PC-9 (cell line): ENCODE measurements at regions of chr2 and their contacts with region 1.

Region 1: DNA sequence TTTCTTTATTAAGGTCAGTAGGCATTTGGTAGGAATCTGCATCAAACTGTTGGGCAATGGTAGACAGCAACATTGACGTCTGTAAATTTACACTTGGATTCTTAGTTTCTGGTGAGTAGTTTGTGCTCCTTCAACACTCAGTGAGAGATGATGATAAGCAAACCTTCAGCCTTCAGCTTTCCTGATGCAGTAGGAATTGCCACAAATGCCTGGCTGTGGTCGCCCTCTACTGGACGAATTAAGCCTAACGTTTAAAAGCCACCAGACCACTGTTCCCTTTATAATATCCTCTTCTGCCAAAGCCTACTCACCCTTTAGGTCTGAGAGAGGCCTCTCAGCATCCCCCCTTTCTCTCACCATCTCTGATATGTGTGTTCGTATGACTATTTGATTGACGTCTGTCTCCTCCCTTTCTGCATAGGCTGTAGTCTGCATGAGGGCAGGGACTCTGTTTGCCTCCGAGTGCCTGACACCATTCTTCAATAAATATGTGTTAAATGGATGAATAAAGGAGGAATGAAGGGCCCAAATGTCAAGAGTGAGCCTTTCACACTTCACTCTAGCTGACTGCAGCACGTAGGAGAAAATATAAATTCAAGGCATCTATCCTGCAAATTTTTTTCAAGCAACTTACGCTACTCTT is 47.0 kb upstream of the PLEKHM3 start:
- DNase-seq: peak in 1 of 2 experiments; percentile 55
- H3K4me3 ChIP-seq: no peak overlapping the region
- H3K27ac ChIP-seq: no peak overlapping the region
- H3K4me1 ChIP-seq: no peaks in the 10 kb centered on the region
- H3K27me3 ChIP-seq: no peaks in the 10 kb centered on the region
- CTCF ChIP-seq: peak; percentile 74

Region 2: GRCh38 chr2:206693399-206694137 is 1378.8 kb before region 1 on chr2:
- CTCF ChIA-PET with region 1: no interaction called
- POLR2A ChIA-PET with region 1: no interaction called
- intact Hi-C with region 1: loop called (anchors 5 kb)
- DNase-seq: peak; percentile 14 to 36
- H3K4me3 ChIP-seq: no peak overlapping the region
- H3K27ac ChIP-seq: no peak overlapping the region
- H3K4me1 ChIP-seq: no peaks in the 10 kb centered on the region
- H3K27me3 ChIP-seq: no peaks in the 10 kb centered on the region
- CTCF ChIP-seq: peak; percentile 72

Region 3: GRCh38 chr2:206981739-206982340 is 1090.5 kb before region 1 on chr2:
- CTCF ChIA-PET with region 1: no interaction called
- POLR2A ChIA-PET with region 1: no interaction called
- intact Hi-C with region 1: loop called (anchors 10 kb)
- DNase-seq: peak in 1 of 2 experiments; percentile 56
- H3K4me3 ChIP-seq: no peak overlapping the region
- H3K27ac ChIP-seq: no peak overlapping the region
- H3K4me1 ChIP-seq: peaks cover 32% of the 10 kb centered on the region
- H3K27me3 ChIP-seq: no peaks in the 10 kb centered on the region
- CTCF ChIP-seq: peak; percentile 72

Region 4: DNA sequence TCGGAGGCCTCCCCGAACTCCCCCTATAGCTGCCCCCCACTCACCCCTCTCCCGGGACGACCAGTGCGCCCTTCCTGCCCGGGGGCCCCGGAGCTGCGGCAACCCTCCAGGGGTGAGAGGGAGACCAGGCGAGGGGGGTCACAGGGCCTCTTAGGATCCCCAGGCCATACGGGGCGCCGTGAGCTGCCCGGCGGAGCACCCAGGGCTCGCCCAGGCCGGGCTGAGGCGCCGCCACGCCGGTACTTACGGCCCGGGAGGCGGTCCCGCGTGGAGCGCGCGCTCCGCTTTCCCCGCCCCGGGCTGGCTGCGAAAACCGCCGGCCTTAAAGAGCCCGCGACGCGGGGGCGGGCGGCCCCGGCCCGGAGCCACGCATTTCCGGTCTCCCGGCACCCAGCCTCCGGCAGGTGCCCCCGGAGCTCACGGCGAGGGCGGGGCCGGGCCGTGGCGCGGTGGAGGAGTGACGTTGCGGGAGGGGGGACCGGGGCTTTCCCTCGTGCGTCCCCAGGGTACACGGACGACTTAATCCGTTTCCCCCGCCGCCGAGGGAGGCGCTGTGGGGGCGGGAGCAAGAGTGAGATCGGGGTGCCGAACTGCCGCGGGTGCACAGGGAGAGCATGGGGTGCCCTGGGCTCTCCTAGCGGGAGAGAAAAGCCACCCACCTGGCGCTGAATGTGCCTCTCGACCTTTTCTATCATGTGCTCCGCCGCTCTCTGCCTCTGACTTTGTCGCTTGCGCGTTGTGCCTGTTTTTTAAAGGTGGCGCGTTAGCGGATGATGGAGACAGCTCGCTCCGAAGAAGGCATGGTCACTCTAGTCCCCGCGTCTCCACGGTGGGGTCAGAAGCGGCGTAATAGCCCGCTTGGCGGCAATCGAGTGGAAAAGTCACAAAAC is 447.1 kb before region 1 on chr2 and contains the start of gene METTL21A:
- CTCF ChIA-PET with region 1: no interaction called
- POLR2A ChIA-PET with region 1: no interaction called
- intact Hi-C with region 1: loop called (anchors 10 kb)
- DNase-seq: peak; percentile 71 to 81
- H3K4me3 ChIP-seq: peak within 1 kb of the TSS; percentile 85
- H3K27ac ChIP-seq: peak within 1 kb of the TSS; percentile 85
- H3K4me1 ChIP-seq: peaks cover 13% of the 10 kb centered on the region
- H3K27me3 ChIP-seq: no peaks in the 10 kb centered on the region
- CTCF ChIP-seq: no peak
- total RNA-seq, gene METTL21A: 11.7 and 13.6 TPM in 2 replicates

Region 5: GRCh38 chr2:208142240-208142924 is 70.0 kb after region 1 on chr2:
- CTCF ChIA-PET with region 1: no interaction called
- POLR2A ChIA-PET with region 1: interaction called, 10 read pairs
- intact Hi-C with region 1: no loop called
- DNase-seq: no peak
- H3K4me3 ChIP-seq: no peak overlapping the region
- H3K27ac ChIP-seq: no peak overlapping the region
- H3K4me1 ChIP-seq: no peaks in the 10 kb centered on the region
- H3K27me3 ChIP-seq: no peaks in the 10 kb centered on the region
- CTCF ChIP-seq: no peak

Region 6: GRCh38 chr2:208638059-208638797 is 565.9 kb after region 1 on chr2:
- CTCF ChIA-PET with region 1: no interaction called
- POLR2A ChIA-PET with region 1: no interaction called
- intact Hi-C with region 1: no loop called
- DNase-seq: peak in 1 of 2 experiments; percentile 73
- H3K4me3 ChIP-seq: no peak overlapping the region
- H3K27ac ChIP-seq: no peak overlapping the region
- H3K4me1 ChIP-seq: peaks cover 12% of the 10 kb centered on the region; the same call in 1 of the 2 replicates
- H3K27me3 ChIP-seq: no peaks in the 10 kb centered on the region
- CTCF ChIP-seq: no peak